Sigmoid colon (tissue), 7 donors: ENCODE measurements at regions of chr19 and their contacts with region 1.

Region 1: DNA sequence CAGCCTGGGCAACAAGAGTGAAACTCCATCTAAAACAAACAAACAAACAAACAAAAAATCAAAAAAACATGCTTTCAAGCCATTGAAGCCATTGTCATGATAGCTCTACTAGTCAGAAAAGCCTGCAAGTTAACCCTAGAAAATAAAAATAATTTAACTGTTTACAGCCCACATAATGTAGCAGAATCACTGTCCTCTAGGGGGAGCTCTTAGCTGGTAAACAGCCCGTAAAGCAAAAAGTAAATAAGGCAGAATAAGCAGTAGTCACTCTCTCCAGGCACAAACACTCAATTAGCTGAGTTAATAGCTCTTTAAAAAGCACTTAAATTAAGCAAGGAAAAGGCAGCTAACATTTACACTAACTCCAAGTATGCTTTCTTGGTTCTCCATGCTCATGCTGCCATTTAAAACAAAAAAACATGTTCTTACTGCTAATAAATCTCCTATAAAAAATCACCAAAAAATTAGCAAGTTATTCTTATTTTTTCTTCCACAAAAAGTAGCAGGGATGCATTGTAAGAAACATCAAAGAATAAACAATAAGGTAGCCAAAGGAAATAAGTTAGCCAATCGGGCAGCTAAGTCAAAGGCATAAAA is 11.3 kb downstream of the LILRB4 start:
- DNase-seq: no peak
- H3K4me3 ChIP-seq: no peak overlapping the region
- H3K27ac ChIP-seq: no peak overlapping the region
- H3K4me1 ChIP-seq: no peaks in the 10 kb centered on the region
- H3K27me3 ChIP-seq: peaks cover 0 to 19% (median 0%) of the 10 kb centered on the region in 3 donors
- CTCF ChIP-seq: peak in 1 of 4 experiments; percentile 20
- EP300 ChIP-seq: no peak
- POLR2A ChIP-seq: no peak

Region 2: DNA sequence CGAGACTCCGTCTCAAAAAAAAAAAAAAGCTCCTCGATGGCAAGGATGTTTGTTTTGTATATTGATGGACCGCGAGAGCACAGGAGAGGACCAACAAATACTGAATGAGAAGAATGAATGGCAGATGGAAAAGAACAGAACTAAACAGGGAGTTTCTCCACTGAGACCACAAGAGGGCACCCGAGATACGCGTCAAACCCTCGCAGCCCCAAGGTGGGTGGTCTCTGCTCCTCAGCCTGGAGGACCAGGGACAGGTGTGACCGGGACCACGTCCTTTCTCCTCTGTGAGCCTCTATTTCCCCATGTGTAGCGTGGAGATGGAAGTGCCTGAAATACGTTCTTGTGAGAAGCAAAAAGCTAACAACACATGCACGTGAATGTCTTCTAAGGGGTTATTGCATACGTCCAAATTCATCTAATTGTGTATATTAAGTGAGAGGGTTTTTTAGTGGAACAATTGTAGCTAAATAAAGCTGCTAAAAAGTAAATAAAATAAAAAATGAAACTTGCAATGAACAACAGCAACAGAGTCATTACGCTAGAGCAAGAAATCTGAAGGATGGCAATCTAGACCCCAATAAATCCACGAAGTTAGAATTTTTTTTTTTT is 192.7 kb before region 1 on chr19:
- intact Hi-C with region 1: loop called (anchors 10 kb)
- DNase-seq: no peak
- H3K4me3 ChIP-seq: no peak overlapping the region
- H3K27ac ChIP-seq: no peak overlapping the region
- H3K4me1 ChIP-seq: no peaks in the 10 kb centered on the region
- H3K27me3 ChIP-seq: peaks cover 0 to 33% (median 0%) of the 10 kb centered on the region in 3 donors
- CTCF ChIP-seq: peak in 3 of 4 experiments; percentile 26 to 49 (median 36)
- EP300 ChIP-seq: no peak
- POLR2A ChIP-seq: no peak